Stomach (tissue), 19 donors: ENCODE measurements at regions of chr10 and their contacts with region 1.

Region 1: DNA sequence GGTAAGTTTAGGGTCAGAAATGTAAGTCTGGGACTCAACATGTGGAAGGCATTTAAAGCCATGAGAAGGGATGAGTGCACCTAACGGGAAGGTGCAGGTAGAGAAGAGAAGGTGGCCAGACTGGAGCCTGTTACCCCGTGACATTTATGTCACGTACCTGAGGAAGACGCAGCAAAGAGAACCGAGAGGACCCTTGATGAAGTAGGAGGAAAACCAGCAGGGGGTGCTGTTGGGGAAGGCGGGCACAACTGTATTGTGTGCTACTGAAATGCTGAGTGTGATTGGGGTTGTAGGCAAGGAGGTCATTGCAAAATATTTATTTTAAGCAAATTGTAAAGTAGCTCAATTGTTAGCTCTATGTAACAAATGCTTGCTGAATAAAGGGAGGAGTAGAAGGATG is 338.2 kb upstream of the PRKCQ start:
- DNase-seq: peak; percentile 43 to 52
- H3K4me3 ChIP-seq: no peak overlapping the region
- H3K27ac ChIP-seq: peak overlapping the region in 1 of 5 donors; percentile 4
- H3K4me1 ChIP-seq: peaks cover 7 to 38% (median 10%) of the 10 kb centered on the region in 4 donors
- H3K27me3 ChIP-seq: no peaks in the 10 kb centered on the region
- CTCF ChIP-seq: peak in 4 of 7 experiments; percentile 6 to 30 (median 18)
- EP300 ChIP-seq: no peak
- POLR2A ChIP-seq: no peak

Region 2: DNA sequence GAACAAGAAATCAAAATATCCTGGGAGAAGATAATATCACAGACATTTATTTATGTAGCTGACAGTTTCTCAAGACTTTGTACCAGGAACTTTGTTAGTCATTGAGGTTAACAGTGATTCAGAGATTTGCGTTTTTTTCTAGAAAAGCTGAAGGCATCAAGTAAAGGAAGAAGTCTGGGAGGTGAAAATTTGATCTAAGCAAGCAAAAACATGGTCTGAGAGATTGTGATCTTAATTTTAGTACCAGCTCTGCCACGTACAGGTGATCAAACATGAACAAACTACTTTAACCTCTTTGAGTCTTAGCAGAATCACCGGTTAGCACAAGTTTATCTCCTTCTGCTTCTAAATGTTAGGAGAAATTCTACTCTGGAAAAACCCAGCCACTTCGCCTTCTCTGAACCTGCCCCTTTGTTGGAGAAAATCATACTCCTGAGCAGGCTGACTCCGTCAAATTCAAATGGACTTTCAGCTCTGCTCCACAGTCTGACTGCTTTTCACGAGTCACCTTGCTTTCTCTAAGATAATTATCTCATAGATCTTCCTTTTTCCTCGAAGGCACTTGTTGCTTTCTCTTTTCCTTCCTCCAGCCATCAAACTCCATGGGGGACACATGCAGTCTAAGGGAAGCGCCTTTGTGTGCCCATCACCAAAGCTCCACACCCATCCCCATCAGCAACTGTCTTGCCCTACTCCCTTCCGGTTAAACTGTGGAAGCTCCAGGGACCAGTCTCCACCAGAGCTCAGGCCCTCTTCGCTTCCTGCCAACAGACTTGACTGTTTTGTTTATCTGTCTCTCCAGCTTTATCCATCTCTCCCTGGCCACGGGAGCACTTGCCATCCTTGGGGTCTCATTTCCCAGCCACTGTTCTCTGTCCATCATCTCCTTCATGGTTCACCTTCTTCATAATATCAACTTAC is 424.5 kb before region 1 on chr10:
- intact Hi-C with region 1: no loop called
- DNase-seq: no peak
- H3K4me3 ChIP-seq: no peak overlapping the region
- H3K27ac ChIP-seq: peak overlapping the region in 1 of 5 donors; percentile 22
- H3K4me1 ChIP-seq: no peaks in the 10 kb centered on the region
- H3K27me3 ChIP-seq: no peaks in the 10 kb centered on the region
- CTCF ChIP-seq: no peak
- EP300 ChIP-seq: no peak
- POLR2A ChIP-seq: no peak

Region 3: GRCh38 chr10:7410862-7411670 is 492.8 kb after region 1 on chr10 and contains the start of gene SFMBT2:
- intact Hi-C with region 1: loop called (anchors 10 kb)
- DNase-seq: peak; percentile 51 to 90
- H3K4me3 ChIP-seq: peak within 1 kb of the TSS; percentile 69 to 84 (median 74)
- H3K27ac ChIP-seq: peak within 1 kb of the TSS; percentile 56 to 87 (median 80)
- H3K4me1 ChIP-seq: peaks cover 29 to 68% (median 63%) of the 10 kb centered on the region in 4 donors
- H3K27me3 ChIP-seq: peaks cover 0 to 61% (median 51%) of the 10 kb centered on the region in 3 donors
- CTCF ChIP-seq: no peak
- EP300 ChIP-seq: no peak
- POLR2A ChIP-seq: no peak
- total RNA-seq, gene SFMBT2: 1.2 to 17.3 (median 13.4) TPM